ENCODE measurements at regions of chr10 and their contacts with region 1.

Region 1: DNA sequence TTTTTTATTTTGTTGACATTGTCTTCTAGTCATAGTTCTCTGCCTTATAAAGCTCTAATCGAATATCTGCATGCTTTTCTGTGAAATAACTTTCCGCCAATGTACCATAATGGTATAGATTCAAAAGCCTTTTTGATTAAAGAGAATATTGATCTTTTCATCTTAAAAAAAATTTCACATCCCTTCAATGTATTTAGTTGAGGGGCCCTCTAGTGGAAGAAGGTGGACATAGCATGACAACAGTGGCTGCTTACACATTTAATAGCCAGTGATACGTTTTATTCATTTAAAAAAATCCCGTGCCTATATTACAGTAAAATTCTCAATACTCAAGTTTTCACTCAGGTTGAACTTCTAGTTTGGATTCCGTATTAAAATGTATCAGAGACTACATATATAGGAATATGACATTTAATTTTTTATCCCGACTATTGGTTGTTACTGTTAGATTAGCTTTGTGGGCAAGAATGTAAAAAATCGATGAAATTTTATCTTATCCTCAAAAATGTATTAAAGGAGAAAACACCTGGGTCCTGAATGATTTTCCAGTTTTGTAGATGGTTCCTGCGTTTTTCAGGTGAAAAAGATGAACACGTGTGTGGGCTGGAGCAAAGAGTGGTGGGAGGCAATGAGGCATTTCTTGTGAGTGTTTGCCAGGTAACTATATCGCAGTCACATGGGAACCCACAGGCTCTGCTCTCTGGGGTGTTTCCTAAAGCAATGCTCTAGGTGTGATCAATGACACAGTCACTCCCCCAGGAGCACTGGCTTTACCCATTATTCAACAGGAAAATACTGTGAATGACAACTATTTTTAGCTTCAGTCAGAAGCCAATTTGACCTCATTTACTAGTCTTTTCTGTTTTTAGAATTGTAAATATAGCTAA is 24.1 kb upstream of the PNLIP start:
- DNase-seq: peak; percentile 66
- H3K4me3 ChIP-seq: no peak overlapping the region; a peak in 1 of 4 replicates
- H3K27ac ChIP-seq: no peak overlapping the region
- H3K4me1 ChIP-seq: no peaks in the 10 kb centered on the region
- H3K27me3 ChIP-seq: no peaks in the 10 kb centered on the region
- CTCF ChIP-seq: peak; percentile 95
- EP300 ChIP-seq: no peak
- RAD21 ChIP-seq: peak; percentile 49; the same call in 1 of the 2 replicates

Region 2: GRCh38 chr10:115456822-115457221 is 1064.8 kb before region 1 on chr10:
- CTCF ChIA-PET with region 1: no interaction called
- POLR2A ChIA-PET with region 1: no interaction called
- DNase-seq: no peak
- H3K4me3 ChIP-seq: no peak overlapping the region
- H3K27ac ChIP-seq: no peak overlapping the region
- H3K4me1 ChIP-seq: no peaks in the 10 kb centered on the region
- H3K27me3 ChIP-seq: no peaks in the 10 kb centered on the region
- CTCF ChIP-seq: no peak
- EP300 ChIP-seq: no peak
- RAD21 ChIP-seq: no peak

Region 3: GRCh38 chr10:116511365-116511764 is 10.3 kb before region 1 on chr10:
- CTCF ChIA-PET with region 1: interaction called, 13 read pairs
- POLR2A ChIA-PET with region 1: no interaction called
- DNase-seq: no peak
- H3K4me3 ChIP-seq: no peak overlapping the region
- H3K27ac ChIP-seq: no peak overlapping the region
- H3K4me1 ChIP-seq: no peaks in the 10 kb centered on the region
- H3K27me3 ChIP-seq: no peaks in the 10 kb centered on the region
- CTCF ChIP-seq: no peak
- EP300 ChIP-seq: no peak
- RAD21 ChIP-seq: no peak